ENCODE measurements at regions of chr17 and their contacts with region 1.

Region 1: GRCh38 chr17:20216154-20216815 is 207.1 kb downstream of the SPECC1 start:
- DNase-seq: no peak
- ATAC-seq: no peak
- H3K4me3 ChIP-seq: no peak overlapping the region
- H3K27ac ChIP-seq: no peak overlapping the region
- H3K4me1 ChIP-seq: peaks cover 3% of the 10 kb centered on the region; the same call in 1 of the 2 replicates
- H3K27me3 ChIP-seq: no peaks in the 10 kb centered on the region
- CTCF ChIP-seq: no peak
- EP300 ChIP-seq: no peak
- POLR2A ChIP-seq: no peak
- RAD21 ChIP-seq: no peak

Region 2: DNA sequence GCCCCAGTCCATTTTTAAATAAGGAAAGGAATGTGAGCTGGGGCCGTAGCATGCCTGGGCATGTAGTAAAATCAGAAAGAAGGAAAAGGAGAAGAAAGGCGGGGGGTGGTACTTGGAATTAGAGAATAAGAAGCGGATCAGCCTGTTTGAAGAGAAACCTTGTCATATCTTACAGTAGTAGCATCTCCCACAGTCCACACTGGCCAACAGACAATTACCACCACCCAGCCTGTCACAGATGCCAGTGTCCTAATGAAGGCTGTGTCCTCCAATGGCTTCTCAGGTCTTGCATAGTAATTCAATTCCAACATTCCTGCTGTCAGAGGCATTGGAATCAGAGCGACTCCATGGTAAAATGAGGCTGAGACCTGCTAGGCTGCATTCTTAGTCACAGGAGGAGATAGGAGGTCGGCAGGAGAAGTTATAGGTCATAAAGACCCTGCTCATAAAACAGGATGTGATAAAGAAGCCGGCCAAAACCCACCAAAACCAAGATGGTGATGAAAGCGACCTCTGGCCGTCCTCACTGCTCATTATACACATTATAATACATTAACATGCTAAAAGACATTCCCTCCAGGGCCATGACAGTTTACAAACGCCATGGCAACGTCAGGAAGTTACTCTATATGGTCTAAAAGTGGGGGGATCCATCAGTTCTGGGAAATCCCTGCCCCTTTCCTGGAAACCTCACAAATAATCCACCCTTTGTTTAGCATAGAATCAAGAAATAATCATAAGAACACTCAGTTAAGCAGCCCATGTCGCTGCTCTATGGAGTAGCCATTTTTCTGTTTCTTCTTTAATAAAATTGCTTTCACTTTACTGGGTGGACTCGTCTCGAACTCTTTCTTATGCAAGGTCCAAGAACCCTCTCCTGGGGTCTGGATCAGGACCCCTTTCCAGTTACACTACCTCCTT is 229.1 kb before region 1 on chr17:
- CTCF ChIA-PET with region 1: no interaction called
- POLR2A ChIA-PET with region 1: no interaction called
- RAD21 ChIA-PET with region 1: no interaction called
- SMC1A ChIA-PET with region 1: no interaction called
- in situ Hi-C with region 1: loop called (anchors 5 kb)
- intact Hi-C with region 1: no loop called
- DNase-seq: no peak
- ATAC-seq: no peak
- H3K4me3 ChIP-seq: no peak overlapping the region
- H3K27ac ChIP-seq: no peak overlapping the region
- H3K4me1 ChIP-seq: no peaks in the 10 kb centered on the region
- H3K27me3 ChIP-seq: no peaks in the 10 kb centered on the region; a peak in 1 of 4 replicates
- CTCF ChIP-seq: no peak
- EP300 ChIP-seq: no peak
- POLR2A ChIP-seq: no peak
- RAD21 ChIP-seq: no peak

Region 3: DNA sequence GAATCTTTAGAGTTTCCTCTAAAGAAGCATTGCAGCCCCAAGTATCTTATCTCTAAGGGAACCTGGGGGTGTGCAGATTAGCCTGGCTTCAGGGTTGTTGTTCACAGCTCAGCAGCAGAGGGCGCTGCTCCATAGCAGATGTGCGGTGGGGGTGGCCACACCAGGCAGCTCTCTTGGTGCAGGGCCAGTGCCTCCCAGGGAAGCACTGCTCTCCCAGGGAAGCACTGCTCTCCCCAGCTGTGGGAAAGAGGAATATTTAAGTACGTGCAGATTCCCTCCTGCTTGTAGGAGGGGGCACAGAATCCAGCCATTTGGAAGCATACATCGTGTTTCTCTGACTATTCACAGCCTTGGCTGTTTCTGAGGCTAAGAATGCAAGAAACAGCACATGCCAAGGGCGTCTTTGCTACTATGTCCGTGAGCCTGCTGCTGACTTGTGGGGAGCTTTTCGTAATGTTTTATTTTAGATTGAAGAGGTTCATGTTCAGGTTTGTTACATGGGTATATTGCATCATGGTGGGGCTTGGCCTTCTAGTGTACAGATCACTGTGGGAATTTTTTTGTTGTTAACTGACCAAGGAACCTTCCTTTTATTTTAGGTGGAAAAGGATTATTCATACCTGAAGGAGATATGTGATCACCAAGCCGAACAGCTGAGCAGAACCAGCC is 10.7 kb after region 1 on chr17:
- CTCF ChIA-PET with region 1: interaction called, 12 read pairs
- POLR2A ChIA-PET with region 1: no interaction called
- RAD21 ChIA-PET with region 1: no interaction called
- SMC1A ChIA-PET with region 1: no interaction called
- in situ Hi-C with region 1: no loop called
- intact Hi-C with region 1: no loop called
- DNase-seq: no peak
- ATAC-seq: peak; percentile 98
- H3K4me3 ChIP-seq: no peak overlapping the region
- H3K27ac ChIP-seq: no peak overlapping the region
- H3K4me1 ChIP-seq: no peaks in the 10 kb centered on the region
- H3K27me3 ChIP-seq: no peaks in the 10 kb centered on the region
- CTCF ChIP-seq: peak; percentile 86 to 87 (median 86)
- EP300 ChIP-seq: no peak
- POLR2A ChIP-seq: no peak
- RAD21 ChIP-seq: peak; percentile 84

Measured in GM12878 (cell line).